WTC11 (cell line): ENCODE measurements at regions of chr22 and their contacts with region 1.

Region 1: DNA sequence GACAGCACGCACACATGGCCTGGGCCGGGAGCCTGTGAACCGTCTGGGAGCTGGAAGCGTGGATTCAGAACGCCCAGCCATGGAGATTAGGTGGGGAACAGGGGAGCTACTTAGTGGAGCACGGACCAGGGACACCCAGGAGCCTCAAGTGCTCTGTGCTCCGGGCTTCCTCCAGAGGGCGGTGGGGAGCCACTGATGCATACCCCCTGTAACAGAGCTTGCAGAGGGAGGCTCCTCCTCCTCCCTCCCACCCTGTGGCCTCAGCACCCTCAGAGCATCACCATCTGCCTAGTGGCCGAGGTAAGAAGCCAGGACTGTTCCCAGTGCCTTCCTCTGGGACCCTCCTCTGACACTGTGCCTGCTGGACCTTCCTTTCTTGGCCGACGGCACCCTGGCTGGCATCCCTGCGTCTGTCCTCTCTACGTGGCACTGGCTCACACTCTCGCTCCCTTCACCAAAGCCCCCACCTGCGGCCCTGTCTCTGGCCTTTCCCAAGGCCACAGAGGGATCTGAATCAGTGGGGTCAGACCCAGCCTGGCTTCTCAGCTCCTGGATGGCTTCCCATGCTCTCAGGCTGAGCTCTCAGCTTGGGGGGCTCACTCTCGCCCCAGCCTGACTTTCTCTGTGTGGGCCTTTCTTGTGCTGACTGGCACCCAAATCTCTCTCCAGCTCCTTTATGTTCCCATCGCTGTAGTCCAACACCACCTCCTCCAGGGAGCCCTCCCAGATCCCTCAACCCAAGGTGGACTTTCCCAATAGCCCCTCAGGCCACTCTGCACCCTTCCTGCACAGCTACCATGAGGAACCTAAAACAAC is 780.9 kb downstream of the BRD1 start:
- DNase-seq: peak; percentile 90
- ATAC-seq: peak; percentile 100
- H3K4me3 Mint-ChIP-seq: no peak overlapping the region
- H3K27ac Mint-ChIP-seq: no peak overlapping the region
- H3K4me1 Mint-ChIP-seq: peaks cover 11% of the 10 kb centered on the region
- H3K27me3 Mint-ChIP-seq: no peaks in the 10 kb centered on the region; the same call in 1 of the 2 replicates
- CTCF ChIP-seq: peak; percentile 48; the same call in 1 of the 2 replicates

Region 2: DNA sequence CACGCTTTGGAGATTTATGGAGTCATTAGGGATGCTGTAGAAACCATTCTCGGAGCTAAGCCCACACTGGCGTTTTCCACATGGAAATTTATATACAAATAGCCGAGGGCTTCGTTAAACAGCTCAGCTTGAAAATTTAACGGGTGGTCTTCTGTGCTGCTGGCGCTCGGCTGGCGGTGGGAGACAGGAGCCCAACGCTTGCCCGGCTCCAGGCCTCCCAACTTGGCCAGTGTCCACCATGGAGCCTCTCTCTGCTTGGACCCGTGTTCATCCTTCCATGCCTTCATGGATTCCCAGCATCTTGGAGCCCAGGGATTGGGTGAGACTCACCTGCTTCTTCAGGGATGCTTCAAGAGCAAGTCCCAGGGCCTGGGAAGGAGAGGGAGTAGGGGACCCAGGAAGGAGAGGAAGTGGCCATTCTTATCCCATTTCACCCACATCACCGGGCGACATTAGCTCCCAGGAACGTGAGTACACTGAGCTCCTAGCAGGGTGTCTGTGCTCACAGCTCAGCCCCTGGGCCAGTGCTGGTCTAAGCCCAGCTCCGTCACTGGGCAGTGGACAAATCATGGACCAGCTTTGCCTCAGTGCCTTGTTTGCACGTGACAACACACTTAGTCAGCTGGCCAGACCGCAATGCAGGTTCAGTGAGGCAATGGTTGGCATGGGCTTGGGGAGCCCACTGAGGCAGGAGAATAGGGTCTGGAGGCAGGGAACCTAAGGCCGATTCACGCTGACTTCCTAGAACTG is 163.4 kb before region 1 on chr22:
- CTCF ChIA-PET with region 1: no interaction called
- POLR2A ChIA-PET with region 1: no interaction called
- DNase-seq: no peak
- ATAC-seq: no peak
- H3K4me3 Mint-ChIP-seq: no peak overlapping the region
- H3K27ac Mint-ChIP-seq: no peak overlapping the region
- H3K4me1 Mint-ChIP-seq: no peaks in the 10 kb centered on the region
- H3K27me3 Mint-ChIP-seq: no peaks in the 10 kb centered on the region
- CTCF ChIP-seq: no peak

Region 3: DNA sequence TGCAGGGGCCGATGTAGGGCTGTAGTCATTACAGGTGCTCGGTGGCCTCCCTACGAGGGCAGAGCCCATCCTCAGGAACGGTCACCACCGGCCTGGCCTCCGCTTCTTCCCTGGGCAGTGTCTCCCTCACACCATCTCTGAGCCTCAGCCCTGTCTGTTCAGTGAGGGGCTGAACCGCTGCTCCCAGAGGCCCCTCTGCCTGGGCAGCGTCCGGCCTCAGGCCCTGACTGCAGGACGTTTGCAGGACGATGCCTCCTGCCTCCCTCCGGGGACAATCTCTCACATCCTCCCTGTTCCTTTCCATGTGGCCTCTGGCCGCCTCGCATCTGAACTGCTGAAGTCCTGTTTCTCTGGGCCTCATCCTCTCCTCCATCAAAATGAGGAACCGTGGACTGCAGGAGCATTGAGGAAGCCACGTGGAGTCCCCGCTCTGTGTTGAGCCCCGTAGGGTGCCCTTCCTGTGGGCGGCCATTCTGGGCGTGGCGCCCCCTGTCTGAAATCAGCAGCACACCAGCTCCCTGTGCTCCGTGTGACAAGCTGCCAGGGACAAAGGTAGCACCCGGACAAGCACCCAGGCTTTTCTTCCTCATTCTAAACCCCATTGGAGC is 152.6 kb before region 1 on chr22:
- CTCF ChIA-PET with region 1: no interaction called
- POLR2A ChIA-PET with region 1: no interaction called
- DNase-seq: peak; percentile 45
- ATAC-seq: peak; percentile 83
- H3K4me3 Mint-ChIP-seq: no peak overlapping the region
- H3K27ac Mint-ChIP-seq: no peak overlapping the region
- H3K4me1 Mint-ChIP-seq: no peaks in the 10 kb centered on the region
- H3K27me3 Mint-ChIP-seq: peaks cover 5% of the 10 kb centered on the region
- CTCF ChIP-seq: peak; percentile 63

Region 4: GRCh38 chr22:49017482-49018329 is 29.0 kb before region 1 on chr22:
- CTCF ChIA-PET with region 1: no interaction called
- POLR2A ChIA-PET with region 1: no interaction called
- DNase-seq: no peak
- ATAC-seq: no peak
- H3K4me3 Mint-ChIP-seq: no peak overlapping the region
- H3K27ac Mint-ChIP-seq: no peak overlapping the region
- H3K4me1 Mint-ChIP-seq: 0 out of 2 replicates have a peak, but pooled peaks cover 5% of the 10 kb centered on the region
- H3K27me3 Mint-ChIP-seq: no peaks in the 10 kb centered on the region
- CTCF ChIP-seq: no peak

Region 5: DNA sequence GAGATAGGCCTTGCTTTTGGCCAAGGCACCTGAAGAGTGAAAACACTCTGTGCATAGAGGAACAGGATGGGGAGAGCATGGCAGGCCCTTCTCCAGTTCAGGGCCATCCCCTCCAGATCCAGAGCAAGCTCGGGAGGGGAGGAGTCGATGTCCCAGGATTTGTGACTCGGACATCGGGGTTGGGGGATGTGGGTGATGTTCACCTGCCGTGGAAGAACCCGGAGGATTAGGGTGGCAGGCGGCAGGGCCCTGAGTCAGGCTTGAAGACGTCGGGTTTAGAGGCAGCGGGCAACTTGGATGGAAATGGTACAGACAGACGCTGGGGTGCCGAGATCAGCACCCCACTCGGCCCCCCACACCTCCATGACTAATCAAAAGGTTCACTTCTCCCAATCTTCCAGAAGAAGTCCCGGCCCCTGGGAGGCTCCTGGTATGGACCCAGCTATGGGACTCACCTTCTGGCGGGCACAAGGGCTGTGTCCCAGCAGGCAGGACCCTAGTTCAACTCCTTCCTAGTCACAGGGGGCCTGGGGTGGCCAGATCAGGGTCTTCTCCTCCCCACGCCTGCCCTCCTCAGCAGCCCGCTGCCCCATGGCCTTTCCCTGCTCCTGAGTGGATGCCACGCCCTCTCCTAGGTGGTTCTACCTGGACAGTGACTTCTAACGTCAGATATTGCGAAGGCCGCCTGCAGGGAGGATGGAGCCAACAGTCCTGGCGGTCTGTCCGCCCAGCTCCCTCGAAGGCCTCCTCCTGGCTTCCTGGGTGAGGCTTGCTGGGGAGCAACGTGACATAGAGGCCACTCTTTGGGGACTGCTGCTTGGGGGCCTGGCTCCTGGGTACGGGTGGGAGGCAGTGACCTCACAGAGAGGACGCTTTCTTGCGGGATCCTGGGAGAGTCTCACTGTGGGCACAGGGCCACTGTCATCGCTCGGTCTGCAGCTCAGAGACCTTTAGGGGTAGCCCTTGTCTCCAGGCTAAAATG is 11.6 kb before region 1 on chr22:
- CTCF ChIA-PET with region 1: interaction called, 15 read pairs
- POLR2A ChIA-PET with region 1: no interaction called
- DNase-seq: no peak
- ATAC-seq: no peak
- H3K4me3 Mint-ChIP-seq: no peak overlapping the region
- H3K27ac Mint-ChIP-seq: no peak overlapping the region
- H3K4me1 Mint-ChIP-seq: peaks cover 6% of the 10 kb centered on the region
- H3K27me3 Mint-ChIP-seq: no peaks in the 10 kb centered on the region; the same call in 1 of the 2 replicates
- CTCF ChIP-seq: no peak

Region 6: DNA sequence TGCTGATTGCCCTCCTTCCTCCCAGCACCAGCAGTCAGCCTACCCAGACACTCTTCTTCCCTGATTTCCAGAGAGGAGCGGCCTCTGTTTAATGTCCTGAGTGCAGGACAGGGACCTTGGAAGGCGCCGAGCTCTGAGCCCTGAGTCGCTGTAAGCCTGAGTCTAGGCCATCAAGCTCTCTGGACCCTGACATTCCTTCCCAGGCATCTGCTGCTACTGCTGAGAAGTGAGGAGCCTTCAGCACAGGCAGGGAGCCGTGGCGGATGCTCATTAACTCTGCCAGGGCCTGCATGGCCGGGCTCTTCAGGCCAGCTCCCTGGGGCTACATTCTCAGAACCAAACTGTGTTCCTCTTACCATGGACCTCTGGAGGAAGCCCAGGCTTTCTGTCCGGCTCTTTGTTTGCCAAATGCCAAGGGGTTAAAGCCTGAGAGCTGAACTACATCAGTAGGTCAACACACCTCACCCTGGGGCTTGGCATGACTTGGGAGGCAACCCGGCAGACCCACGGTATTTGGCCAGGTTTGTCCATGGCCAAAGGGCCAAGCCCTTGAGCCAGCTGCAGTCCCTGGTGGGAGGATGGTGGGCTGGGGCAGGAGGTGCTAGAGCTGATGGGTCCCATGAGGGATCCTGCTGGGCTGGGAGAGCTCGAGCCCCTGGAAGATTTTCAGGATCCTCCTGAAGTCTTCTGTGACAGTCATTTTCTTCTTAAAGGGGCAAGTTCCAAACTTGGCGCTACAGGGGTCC is 59.5 kb after region 1 on chr22:
- CTCF ChIA-PET with region 1: interaction called, 14 read pairs
- POLR2A ChIA-PET with region 1: interaction called, 3 read pairs
- DNase-seq: no peak
- ATAC-seq: no peak
- H3K4me3 Mint-ChIP-seq: no peak overlapping the region
- H3K27ac Mint-ChIP-seq: no peak overlapping the region
- H3K4me1 Mint-ChIP-seq: peaks cover 10% of the 10 kb centered on the region
- H3K27me3 Mint-ChIP-seq: no peaks in the 10 kb centered on the region
- CTCF ChIP-seq: no peak

Region 7: GRCh38 chr22:49163960-49164690 is 117.4 kb after region 1 on chr22:
- CTCF ChIA-PET with region 1: interaction called, 30 read pairs
- POLR2A ChIA-PET with region 1: no interaction called
- DNase-seq: no peak
- ATAC-seq: no peak
- H3K4me3 Mint-ChIP-seq: no peak overlapping the region
- H3K27ac Mint-ChIP-seq: no peak overlapping the region
- H3K4me1 Mint-ChIP-seq: no peaks in the 10 kb centered on the region
- H3K27me3 Mint-ChIP-seq: no peaks in the 10 kb centered on the region
- CTCF ChIP-seq: no peak

Region 8: DNA sequence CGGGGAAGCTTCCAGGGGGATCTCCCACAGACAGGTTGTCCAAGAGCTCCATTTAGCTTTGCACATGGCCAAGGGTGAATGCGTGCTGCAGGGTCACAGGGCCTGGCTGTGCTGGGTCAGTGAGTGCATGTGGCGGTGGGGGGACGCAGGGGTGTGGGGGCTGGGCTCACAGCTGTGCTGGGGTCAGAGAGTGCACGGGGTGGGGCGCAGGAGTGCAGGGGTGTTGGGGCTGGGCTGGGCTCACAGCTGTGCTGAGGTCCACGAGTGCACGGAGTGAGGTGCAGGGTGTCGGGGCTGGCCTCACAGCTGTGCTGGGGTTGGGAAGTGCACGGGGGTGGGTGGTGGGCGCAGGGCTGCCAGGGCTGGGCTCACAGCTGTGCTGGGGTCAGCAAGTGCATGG is 223.2 kb after region 1 on chr22:
- CTCF ChIA-PET with region 1: interaction called, 19 read pairs
- POLR2A ChIA-PET with region 1: no interaction called
- DNase-seq: peak; percentile 42
- ATAC-seq: peak; percentile 24
- H3K4me3 Mint-ChIP-seq: peak overlapping the region; percentile 64
- H3K27ac Mint-ChIP-seq: peak overlapping the region; percentile 78; the same call in 1 of the 2 replicates
- H3K4me1 Mint-ChIP-seq: peaks cover 40% of the 10 kb centered on the region
- H3K27me3 Mint-ChIP-seq: peaks cover 41% of the 10 kb centered on the region
- CTCF ChIP-seq: no peak

Region 9: DNA sequence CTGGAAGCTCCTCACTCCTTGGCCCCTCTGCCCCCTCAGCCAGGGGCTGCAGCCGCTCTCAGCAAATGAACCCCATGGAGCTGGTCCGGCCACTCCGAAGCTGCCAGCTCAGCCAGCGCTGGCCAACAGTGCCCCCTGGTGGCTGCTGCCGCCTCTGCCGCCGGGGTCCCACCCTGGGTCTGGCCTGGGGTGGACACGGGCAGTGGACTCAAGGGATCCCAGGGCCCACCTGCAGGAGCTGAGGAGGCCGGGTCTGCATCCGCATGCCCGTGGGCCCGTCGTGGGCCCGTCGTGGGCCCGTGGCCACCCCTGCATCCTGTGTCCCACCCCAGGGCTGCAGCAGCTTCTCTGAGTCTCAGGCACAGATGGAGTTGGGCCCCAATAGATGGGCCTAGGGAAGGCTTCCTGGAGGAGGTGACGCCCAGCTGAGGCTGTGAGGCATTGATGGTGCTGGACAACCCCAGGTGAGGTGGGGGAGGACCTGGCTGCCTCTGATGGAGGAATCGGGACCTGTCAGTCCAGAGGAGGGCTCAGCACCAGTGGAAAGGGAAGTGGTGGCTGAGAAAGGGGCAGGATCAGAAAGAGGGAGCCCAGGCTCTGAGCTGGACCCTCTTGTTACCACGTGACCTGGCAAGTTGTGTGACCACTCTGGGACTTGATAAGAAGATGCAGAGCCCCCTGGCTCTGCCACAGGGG is 258.6 kb after region 1 on chr22:
- CTCF ChIA-PET with region 1: interaction called, 127 read pairs
- POLR2A ChIA-PET with region 1: no interaction called
- DNase-seq: peak; percentile 94
- ATAC-seq: peak; percentile 91
- H3K4me3 Mint-ChIP-seq: no peak overlapping the region
- H3K27ac Mint-ChIP-seq: no peak overlapping the region
- H3K4me1 Mint-ChIP-seq: no peaks in the 10 kb centered on the region
- H3K27me3 Mint-ChIP-seq: no peaks in the 10 kb centered on the region; the same call in 1 of the 2 replicates
- CTCF ChIP-seq: peak; percentile 96